Thyroid gland (tissue), 4 donors: ENCODE measurements at regions of chr3 and their contacts with region 1.

Region 1: GRCh38 chr3:126267226-126267975 is 87.0 kb upstream of the ALDH1L1 start:
- DNase-seq: peak; percentile 80 to 84
- H3K4me3 ChIP-seq: peak overlapping the region in 1 of 3 donors; percentile 25
- H3K27ac ChIP-seq: peak overlapping the region; percentile 49 to 80 (median 57)
- H3K4me1 ChIP-seq: peaks cover 26 to 45% of the 10 kb centered on the region in 2 donors
- H3K27me3 ChIP-seq: no peaks in the 10 kb centered on the region
- CTCF ChIP-seq: peak in 1 of 6 experiments; percentile 4
- POLR2A ChIP-seq: no peak

Region 2: DNA sequence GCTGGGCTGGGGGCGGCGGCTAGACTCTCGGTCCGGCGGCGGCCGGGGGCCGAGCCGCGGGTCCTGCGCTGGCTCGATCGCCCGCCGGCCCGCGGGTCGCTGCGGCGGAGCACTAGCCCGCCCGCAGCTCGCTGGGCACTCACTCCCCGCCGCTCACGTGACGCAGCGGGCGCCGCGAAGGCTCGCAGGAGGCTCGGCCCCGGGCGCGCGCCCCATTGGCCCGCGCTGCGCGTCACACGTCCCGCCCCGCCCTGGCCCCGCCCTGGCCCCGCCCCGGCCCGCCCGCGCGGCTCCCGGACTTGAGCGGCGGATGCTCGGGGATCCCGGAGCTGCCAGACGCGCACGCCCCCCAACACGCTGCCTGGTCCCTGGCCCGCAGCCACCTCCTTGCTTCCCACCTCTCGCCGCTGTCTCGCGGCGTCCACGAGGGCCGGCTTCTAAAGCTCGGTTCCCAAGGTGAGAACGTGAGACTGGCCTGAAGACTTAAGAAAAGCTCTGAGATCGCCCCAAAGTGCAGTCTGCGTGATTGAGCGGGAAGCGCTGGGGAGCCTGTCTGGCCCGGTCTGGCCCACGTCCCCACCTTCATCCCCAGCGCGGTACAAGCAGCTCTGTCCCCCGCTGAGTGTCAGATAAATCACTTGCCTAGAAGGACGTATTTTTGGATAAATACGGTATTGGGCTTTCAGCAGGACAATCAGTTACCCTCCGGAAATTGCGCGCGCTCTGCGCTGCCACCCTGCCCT is 90.1 kb after region 1 on chr3 and contains the start of gene KLF15:
- intact Hi-C with region 1: loop called (anchors 5 kb)
- DNase-seq: peak; percentile 88 to 90
- H3K4me3 ChIP-seq: peak within 1 kb of the TSS; percentile 51 to 84 (median 70)
- H3K27ac ChIP-seq: peak within 1 kb of the TSS; percentile 80 to 95 (median 84)
- H3K4me1 ChIP-seq: peaks cover 11 to 24% of the 10 kb centered on the region in 2 donors
- H3K27me3 ChIP-seq: no peaks in the 10 kb centered on the region
- CTCF ChIP-seq: no peak
- POLR2A ChIP-seq: peak; percentile 63 to 90
- total RNA-seq, gene KLF15: 20.6 to 49.2 (median 27.5) TPM

Region 3: DNA sequence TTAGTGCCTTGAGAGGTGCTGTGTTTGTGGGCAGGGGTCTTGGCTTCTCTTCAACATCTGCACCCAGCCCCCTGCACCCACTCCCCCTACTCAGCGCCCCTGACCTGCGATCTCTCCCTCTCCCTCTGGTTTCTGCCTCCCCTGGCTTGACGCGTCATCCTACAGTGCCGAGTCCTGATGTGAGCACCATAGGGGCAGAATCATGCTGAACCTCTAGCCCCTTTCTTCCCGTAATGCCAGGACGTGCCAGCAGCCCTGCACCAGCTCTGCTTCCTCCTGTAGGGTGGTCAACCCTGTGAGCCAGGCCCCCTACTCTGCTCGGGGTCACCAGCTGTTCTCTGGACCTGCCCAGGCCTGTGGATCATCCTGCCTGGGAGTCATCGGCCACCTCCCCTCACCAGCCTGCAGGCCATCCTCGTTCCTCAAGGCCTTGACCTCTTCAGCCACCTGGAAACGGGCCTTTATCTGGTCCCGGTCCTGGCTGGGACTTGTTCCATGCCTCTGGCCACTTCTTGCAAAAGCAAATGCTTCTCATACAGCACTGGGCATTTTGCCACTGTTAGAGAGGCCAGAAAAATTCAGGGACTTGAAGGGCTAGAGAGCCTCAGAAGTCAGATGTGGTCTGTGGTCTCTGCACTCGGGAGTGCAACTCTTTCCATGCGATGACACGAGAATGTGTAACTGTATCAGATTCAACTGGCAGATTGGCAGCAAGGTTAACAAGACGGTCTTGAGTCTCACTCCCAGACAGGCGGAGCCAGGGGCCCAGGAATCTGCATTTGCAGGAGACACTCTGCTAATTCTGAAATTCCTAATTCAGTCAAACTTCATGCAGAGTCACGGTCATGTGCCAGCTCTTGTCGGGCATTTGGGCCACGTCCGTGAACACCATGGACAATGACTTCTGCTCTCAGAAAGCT is 106.5 kb after region 1 on chr3:
- intact Hi-C with region 1: no loop called
- DNase-seq: peak; percentile 70 to 74
- H3K4me3 ChIP-seq: no peak overlapping the region
- H3K27ac ChIP-seq: peak overlapping the region in 1 of 3 donors; percentile 15
- H3K4me1 ChIP-seq: peaks cover 0 to 8% of the 10 kb centered on the region in 2 donors
- H3K27me3 ChIP-seq: no peaks in the 10 kb centered on the region
- CTCF ChIP-seq: no peak
- POLR2A ChIP-seq: no peak

Region 4: GRCh38 chr3:126475413-126476114 is 208.2 kb after region 1 on chr3 and contains the start of gene ZXDC:
- intact Hi-C with region 1: loop called (anchors 10 kb)
- DNase-seq: peak; percentile 96
- H3K4me3 ChIP-seq: peak within 1 kb of the TSS; percentile 37 to 61 (median 60)
- H3K27ac ChIP-seq: peak within 1 kb of the TSS; percentile 56 to 90 (median 85)
- H3K4me1 ChIP-seq: peaks cover 31 to 34% of the 10 kb centered on the region in 2 donors
- H3K27me3 ChIP-seq: no peaks in the 10 kb centered on the region
- CTCF ChIP-seq: peak in 3 of 6 experiments; percentile 32 to 51 (median 50)
- POLR2A ChIP-seq: peak; percentile 87 to 93
- total RNA-seq, gene ZXDC: 51.5 to 96.8 (median 57.4) TPM